HEK293T (cell line): ENCODE measurements at regions of chr6 and their contacts with region 1.

Region 1: DNA sequence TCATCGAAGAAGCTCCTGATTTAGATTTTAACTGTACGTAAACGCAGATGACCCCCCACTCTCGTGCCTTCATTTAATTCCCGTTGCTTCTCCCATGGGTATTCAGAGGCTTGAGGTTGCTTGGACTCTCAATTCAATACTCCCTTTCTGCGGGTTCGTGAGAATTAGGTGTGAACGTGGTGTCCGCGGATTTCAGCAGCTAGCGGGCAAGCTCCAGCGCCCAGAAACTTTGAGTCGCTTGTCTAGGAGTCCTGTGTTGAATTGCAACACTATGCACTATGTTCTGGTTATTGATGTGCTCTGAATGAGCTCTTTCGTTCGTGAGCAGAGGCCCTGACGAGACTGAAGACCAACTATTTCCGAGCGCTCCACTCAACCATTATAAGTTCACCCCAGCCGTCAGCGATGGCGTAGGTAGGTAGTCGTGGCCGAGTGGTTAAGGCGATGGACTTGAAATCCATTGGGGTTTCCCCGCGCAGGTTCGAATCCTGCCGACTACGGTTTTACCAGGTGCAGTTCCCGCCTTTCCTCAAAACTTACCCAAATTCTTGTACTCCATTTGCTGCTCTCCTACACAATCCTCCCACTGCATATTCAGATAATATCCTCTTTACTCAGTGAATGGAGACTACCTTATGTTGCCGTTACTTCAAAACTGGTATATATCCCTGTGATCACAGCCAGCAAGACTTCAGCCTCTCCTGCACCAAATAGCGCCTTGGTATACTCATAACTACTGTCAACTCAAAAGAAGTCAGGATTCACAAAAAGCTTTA is 72.6 kb upstream of the ZNF184 start:
- DNase-seq: peak; percentile 50

Region 2: GRCh38 chr6:27426045-27426620 is 119.3 kb before region 1 on chr6:
- CTCF ChIA-PET with region 1: no interaction called
- POLR2A ChIA-PET with region 1: no interaction called
- DNase-seq: no peak

Region 3: DNA sequence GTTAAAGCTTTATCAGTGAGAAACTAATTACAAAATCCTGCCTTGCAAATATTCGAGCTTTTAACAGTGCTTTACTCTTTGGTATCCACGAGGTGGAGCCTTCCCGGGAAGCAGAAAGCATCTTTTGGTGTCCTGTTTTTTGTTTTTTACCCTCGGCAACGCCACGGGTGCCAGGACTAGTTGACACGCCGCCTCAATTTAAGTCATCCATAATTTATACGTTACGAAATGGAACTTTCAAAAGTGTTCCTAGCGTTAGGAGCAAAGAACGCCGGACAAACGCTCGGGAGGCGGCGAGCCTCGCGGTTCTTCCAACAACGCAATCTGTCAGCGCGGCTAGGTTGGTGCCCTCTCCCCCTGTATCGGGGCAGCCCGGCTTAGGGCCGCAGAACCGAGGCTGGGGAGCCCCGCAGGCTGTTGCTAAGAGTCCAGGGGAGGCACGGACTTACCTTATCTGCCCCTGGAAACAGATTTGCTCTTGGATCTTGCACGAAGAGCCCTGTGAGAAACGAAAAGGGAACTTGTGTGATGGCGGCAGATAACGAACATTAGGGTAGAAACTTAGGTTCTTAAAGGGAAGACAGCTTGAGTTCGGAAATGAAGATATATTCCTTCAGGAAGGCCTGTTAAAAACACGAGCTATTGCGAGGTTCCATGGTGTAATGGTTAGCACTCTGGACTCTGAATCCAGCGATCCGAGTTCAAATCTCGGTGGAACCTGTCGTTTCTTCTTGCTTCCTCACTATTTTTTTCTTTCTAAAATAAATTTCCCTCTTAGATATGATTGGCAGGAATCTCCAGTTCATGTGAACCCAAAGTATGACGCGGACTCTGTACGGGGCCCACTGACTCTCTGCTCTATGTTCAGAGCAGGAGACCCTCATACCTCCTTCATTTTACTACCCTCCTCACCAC is 26.3 kb before region 1 on chr6:
- CTCF ChIA-PET with region 1: no interaction called
- POLR2A ChIA-PET with region 1: interaction called, 23 read pairs
- DNase-seq: peak; percentile 63

Region 4: GRCh38 chr6:27601668-27602254 is 56.3 kb after region 1 on chr6:
- CTCF ChIA-PET with region 1: no interaction called
- POLR2A ChIA-PET with region 1: interaction called, 10 read pairs
- DNase-seq: peak; percentile 37

Region 5: DNA sequence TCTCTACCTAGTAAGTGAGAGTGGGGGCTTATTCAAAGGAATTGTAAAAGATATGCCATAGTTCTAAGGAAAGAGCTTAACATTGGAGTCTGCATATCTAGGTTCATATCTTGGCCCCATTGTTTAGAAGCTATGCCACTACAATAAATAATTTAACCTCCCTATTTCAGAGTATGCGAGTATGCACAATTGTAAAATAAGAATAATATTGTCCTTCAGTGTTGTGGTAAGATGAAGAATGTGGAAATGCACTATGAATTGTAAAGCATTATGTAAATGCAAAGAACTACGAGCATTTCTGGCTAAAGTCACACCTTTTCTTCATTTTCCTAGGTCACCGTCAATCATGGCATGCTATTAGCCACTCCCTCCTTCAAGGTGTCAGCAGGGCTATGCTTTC is 518.8 kb after region 1 on chr6:
- CTCF ChIA-PET with region 1: no interaction called
- POLR2A ChIA-PET with region 1: no interaction called
- DNase-seq: no peak